Gastrocnemius medialis (tissue), 4 donors: ENCODE measurements at regions of chr13 and their contacts with region 1.

Region 1: DNA sequence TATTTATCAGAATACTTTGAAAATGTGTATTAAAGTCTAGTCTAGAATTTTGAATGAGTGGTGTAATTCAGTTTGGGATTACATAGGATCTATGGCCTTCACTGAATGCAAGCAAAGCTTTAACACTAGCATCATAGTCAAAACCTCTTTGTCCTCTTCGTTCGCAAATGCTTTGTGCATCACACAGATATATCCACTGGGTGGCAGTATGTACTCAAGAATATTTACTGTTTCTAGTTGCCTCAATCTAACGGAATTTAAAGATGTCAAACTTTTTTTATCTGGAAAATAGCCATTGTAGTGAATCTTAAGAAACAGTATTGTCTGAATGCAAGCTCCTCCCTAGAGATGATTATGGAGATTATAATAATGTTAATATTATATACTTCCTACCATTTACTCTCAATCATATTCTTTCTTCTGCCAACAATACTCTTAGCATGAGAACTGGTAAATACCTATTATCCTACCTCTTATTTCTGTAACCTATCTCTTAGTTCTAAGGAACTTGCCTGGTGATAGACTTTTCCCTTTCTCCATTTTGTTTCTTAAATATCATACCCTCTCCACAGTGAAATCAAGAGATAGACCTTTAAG is 25.8 kb downstream of the LACC1 start:
- DNase-seq: no peak
- ATAC-seq: peak; percentile 61 to 77
- H3K4me3 ChIP-seq: no peak overlapping the region
- H3K27ac ChIP-seq: no peak overlapping the region
- H3K4me1 ChIP-seq: peaks cover 0 to 4% of the 10 kb centered on the region in 2 donors
- H3K27me3 ChIP-seq: no peaks in the 10 kb centered on the region
- CTCF ChIP-seq: peak; percentile 66 to 84 (median 76)
- POLR2A ChIP-seq: no peak

Region 2: GRCh38 chr13:43874504-43875092 is 30.9 kb before region 1 on chr13:
- in situ Hi-C with region 1: no loop called
- intact Hi-C with region 1: no loop called
- DNase-seq: no peak
- ATAC-seq: no peak
- H3K4me3 ChIP-seq: no peak overlapping the region
- H3K27ac ChIP-seq: no peak overlapping the region
- H3K4me1 ChIP-seq: peaks cover 0 to 6% of the 10 kb centered on the region in 2 donors
- H3K27me3 ChIP-seq: no peaks in the 10 kb centered on the region
- CTCF ChIP-seq: peak; percentile 25 to 73 (median 61)
- POLR2A ChIP-seq: no peak

Region 3: DNA sequence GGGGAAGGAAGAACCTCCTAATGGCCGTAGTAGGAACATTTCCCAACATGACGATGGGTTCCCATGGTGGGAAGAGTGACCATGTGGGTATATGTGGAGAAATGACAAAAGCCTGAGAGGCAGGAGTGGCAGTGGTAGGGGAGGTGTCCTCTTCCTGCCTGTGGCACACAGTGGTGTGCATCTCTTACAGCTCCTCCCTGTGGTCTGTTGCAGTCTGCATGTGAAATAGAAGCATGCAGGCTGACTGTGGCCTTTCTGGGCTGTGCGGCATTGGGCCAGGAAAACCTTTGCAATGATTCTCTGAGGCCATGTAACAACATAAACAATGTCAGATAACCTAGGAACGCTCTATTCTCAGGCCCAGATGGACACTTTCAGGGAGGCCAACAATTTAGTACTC is 58.2 kb after region 1 on chr13:
- in situ Hi-C with region 1: no loop called
- intact Hi-C with region 1: no loop called
- DNase-seq: no peak
- ATAC-seq: no peak
- H3K4me3 ChIP-seq: no peak overlapping the region
- H3K27ac ChIP-seq: no peak overlapping the region
- H3K4me1 ChIP-seq: no peaks in the 10 kb centered on the region
- H3K27me3 ChIP-seq: no peaks in the 10 kb centered on the region
- CTCF ChIP-seq: no peak
- POLR2A ChIP-seq: no peak

Region 4: DNA sequence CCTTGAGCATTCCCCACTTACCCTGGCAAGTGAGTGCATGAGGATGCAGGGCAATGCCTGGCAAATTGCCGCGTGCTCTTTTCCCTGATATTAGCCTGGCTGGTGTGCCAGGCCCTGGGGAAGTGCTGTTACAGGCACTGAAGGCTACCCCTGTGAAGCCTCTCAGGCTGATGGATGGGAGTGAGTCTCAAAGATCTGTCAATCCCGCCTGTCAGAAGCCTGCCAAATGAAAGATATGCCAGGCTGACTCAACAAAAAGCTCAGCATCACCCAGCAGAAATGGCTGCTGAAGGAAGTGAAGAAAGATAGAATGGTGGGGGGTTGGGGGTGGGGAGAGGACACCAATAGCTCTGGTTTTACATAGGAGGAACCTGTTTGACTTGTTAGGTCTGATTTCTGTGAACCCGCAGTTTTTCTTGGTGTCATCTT is 86.3 kb after region 1 on chr13:
- in situ Hi-C with region 1: no loop called
- intact Hi-C with region 1: no loop called
- DNase-seq: no peak
- ATAC-seq: no peak
- H3K4me3 ChIP-seq: no peak overlapping the region
- H3K27ac ChIP-seq: no peak overlapping the region
- H3K4me1 ChIP-seq: peaks cover 3 to 5% of the 10 kb centered on the region in 2 donors
- H3K27me3 ChIP-seq: no peaks in the 10 kb centered on the region
- CTCF ChIP-seq: no peak
- POLR2A ChIP-seq: no peak

Region 5: DNA sequence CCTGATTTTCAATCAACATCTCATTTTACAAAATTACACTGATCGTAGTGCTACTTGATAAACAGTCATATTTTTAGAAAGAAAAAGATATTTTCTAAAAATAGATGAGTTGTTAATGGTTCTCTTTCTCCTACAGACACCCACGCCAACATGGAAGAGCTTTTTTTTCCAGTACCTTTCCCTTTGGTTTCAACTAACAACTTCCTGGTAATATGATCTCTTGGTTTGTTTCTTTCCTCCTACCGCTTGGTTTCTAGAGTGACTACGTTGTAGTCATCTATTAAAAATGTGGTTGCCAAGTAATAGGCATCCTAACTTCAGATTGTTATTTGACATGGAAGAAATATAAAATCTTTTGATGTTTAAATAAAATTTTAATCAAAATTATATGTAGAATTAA is 163.2 kb after region 1 on chr13:
- in situ Hi-C with region 1: loop called in 1 of 4 experiments (anchors 10 kb)
- intact Hi-C with region 1: loop called (anchors 2 kb)
- DNase-seq: no peak
- ATAC-seq: peak; percentile 60
- H3K4me3 ChIP-seq: no peak overlapping the region
- H3K27ac ChIP-seq: peak overlapping the region in 1 of 4 donors; percentile 0
- H3K4me1 ChIP-seq: peaks cover 7% of the 10 kb centered on the region in 2 donors
- H3K27me3 ChIP-seq: no peaks in the 10 kb centered on the region
- CTCF ChIP-seq: no peak
- POLR2A ChIP-seq: no peak

Region 6: DNA sequence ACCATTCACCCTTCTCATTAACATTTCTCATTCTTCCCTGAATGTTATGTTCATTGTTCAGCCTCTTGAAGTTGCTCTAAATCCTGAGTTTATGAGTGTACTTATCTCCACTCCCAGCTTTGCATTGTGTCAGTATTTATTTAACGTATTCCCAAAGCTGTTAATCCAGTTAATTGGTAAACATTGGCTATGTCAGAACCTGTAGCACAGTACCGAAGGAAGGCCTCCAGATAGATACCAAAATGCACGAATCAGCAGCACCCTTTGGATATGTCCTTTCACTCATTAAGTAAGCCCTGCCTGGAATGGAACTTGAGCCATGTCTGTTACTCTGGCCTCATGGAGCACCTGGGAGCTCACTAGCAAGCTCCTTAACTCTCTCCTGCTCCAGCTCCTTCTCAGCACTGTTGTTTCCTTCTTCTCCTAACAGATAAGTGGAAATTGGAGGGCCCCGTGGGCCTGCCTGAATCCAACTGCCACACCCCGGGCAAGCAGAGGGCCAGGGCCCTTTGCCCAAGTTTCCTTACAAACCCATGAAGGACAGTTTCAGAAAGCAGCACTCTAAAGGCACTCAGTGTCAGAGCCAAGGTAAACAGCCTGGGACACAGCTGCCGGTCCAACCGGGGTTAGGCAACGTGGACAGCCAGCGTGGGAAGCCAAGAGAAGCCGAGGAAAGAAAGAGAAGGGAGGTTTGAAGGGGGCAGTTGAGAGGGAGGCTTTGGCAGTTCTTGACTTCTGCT is 313.1 kb after region 1 on chr13:
- in situ Hi-C with region 1: loop called in 1 of 4 experiments (anchors 25 kb)
- intact Hi-C with region 1: no loop called
- DNase-seq: peak; percentile 81 to 87
- ATAC-seq: peak; percentile 92 to 95
- H3K4me3 ChIP-seq: no peak overlapping the region
- H3K27ac ChIP-seq: peak overlapping the region; percentile 79 to 90 (median 85)
- H3K4me1 ChIP-seq: peaks cover 29 to 46% of the 10 kb centered on the region in 2 donors
- H3K27me3 ChIP-seq: no peaks in the 10 kb centered on the region
- CTCF ChIP-seq: no peak
- POLR2A ChIP-seq: no peak

Region 7: DNA sequence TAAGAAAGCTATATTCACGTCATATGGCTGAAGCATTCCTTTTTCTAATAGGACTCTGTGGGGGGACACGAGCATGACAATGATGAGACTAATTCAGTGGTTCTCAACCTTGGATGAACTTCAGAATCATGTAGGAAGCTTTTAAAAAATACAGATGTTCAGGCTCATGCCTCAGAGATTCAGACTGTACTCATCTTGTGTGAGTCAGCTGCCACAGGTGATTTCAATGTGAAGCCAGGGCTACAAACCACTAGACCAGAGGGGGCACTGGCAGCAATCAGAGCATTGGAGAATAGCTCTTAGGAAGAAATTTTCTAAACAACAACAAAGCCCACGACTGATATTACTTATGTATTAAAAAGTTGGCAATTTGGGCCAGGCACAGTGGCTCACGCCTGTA is 559.8 kb after region 1 on chr13:
- in situ Hi-C with region 1: loop called in 2 of 4 experiments (anchors 10 kb)
- intact Hi-C with region 1: loop called (anchors 1 kb)
- DNase-seq: no peak
- ATAC-seq: peak; percentile 65 to 68
- H3K4me3 ChIP-seq: no peak overlapping the region
- H3K27ac ChIP-seq: peak overlapping the region; percentile 3 to 43 (median 36)
- H3K4me1 ChIP-seq: peaks cover 55 to 82% of the 10 kb centered on the region in 2 donors
- H3K27me3 ChIP-seq: no peaks in the 10 kb centered on the region
- CTCF ChIP-seq: no peak
- POLR2A ChIP-seq: no peak

Region 8: GRCh38 chr13:44667943-44668342 is 762.4 kb after region 1 on chr13:
- in situ Hi-C with region 1: loop called in 1 of 4 experiments (anchors 25 kb)
- intact Hi-C with region 1: no loop called
- DNase-seq: no peak
- ATAC-seq: no peak
- H3K4me3 ChIP-seq: peak overlapping the region in 2 of 4 donors; percentile 11 to 46
- H3K27ac ChIP-seq: no peak overlapping the region
- H3K4me1 ChIP-seq: peaks cover 8 to 13% of the 10 kb centered on the region in 2 donors
- H3K27me3 ChIP-seq: no peaks in the 10 kb centered on the region
- CTCF ChIP-seq: no peak
- POLR2A ChIP-seq: no peak

Region 9: DNA sequence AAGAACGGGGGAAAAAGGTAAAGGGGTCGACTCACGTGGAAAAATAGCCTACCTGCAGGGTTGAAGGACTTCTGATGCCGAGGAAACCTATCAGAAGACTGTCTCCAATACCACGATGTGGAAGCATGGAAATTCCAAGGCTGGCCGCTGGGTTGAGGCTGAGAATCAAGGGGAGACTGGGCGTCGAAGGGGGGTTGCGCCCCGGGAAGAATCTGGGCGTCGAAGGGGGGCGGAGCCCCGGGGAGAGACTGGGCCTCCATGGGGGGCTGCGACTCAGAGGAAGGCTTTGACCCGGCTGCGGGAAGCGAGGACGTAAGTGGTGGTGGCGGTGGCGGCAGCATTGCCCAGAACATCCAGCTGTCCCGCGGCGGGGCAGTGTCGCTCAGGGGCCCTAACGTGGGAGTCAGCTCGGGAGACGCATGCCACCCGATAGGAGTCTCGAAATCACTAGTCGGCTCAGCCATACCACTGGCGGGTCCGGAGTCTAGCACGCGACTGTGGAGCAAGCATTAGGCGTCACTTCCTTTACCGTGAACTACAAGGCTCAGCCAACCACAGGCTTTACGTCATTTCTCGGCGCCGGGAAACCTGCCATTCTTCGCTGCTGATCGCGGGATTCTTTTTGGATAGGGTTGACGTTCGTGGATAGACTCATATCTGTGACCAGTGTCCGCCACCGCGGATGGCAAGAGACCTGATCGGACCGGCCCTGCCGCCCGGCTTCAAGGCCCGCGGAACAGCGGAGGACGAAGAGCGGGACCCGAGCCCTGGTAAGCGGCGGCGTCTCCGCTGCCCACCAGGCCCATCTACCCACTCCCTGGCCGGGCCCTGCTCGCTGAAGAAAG is 1083.7 kb after region 1 on chr13 and contains the starts of genes GPALPP1 and NUFIP1:
- in situ Hi-C with region 1: loop called in 3 of 4 experiments (anchors 25 kb)
- intact Hi-C with region 1: no loop called
- DNase-seq: peak; percentile 92 to 94
- ATAC-seq: peak; percentile 99
- H3K4me3 ChIP-seq: peak within 1 kb of the TSS; percentile 89 to 99 (median 94)
- H3K27ac ChIP-seq: peak within 1 kb of the TSS; percentile 93 to 99 (median 94)
- H3K4me1 ChIP-seq: peaks cover 33 to 34% of the 10 kb centered on the region in 2 donors
- H3K27me3 ChIP-seq: no peaks in the 10 kb centered on the region
- CTCF ChIP-seq: peak in 3 of 5 experiments; percentile 15 to 31 (median 18)
- POLR2A ChIP-seq: peak; percentile 80 to 81
- total RNA-seq, gene GPALPP1: 6.4 to 16.2 (median 9.6) TPM
- total RNA-seq, gene NUFIP1: 3.4 to 5.3 (median 4.5) TPM

Region 10: GRCh38 chr13:45310341-45311125 is 1405.0 kb after region 1 on chr13:
- in situ Hi-C with region 1: loop called in 2 of 4 experiments (anchors 25 kb)
- intact Hi-C with region 1: no loop called
- DNase-seq: no peak
- ATAC-seq: no peak
- H3K4me3 ChIP-seq: peak overlapping the region; percentile 39 to 56 (median 44)
- H3K27ac ChIP-seq: no peak overlapping the region
- H3K4me1 ChIP-seq: peaks cover 4 to 10% of the 10 kb centered on the region in 2 donors
- H3K27me3 ChIP-seq: no peaks in the 10 kb centered on the region
- CTCF ChIP-seq: no peak
- POLR2A ChIP-seq: no peak